ENCODE measurements at regions of chr3 and their contacts with region 1.

Region 1: DNA sequence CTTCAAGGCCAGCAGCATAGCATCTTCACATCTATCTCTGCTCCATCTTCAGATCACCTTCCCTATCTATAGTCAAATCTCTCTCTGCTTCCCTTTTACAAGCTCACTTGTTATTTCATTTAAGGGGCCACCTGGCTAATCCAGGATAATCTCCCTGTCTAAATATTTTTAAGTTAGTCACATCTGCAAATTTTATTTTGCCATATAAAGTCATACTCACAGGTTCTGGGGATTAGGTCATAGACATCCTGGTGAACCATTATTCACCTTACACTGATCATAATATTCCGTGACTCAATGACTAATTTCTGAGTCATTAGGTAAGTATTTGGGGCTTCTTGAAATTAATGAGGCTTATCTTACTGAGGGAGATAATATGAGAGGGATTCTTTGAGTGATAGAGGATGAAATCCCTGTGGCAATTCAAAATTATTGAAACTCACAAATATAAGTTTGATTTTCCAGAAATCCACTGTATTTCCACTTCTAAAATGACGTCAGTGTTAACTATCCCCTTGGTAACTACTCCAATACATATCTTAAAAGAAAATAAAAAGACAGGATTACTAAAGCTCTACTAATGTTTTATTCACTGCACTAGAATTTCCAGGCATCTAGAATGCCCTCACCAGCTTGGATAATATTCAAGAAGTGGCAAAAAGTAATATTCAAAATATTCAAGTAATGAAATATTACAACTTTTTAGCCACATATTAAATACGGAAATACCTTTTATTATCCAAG is 93.7 kb upstream of the RBMS3 start:
- DNase-seq: no peak
- ATAC-seq: no peak

Region 2: GRCh38 chr3:28347374-28348264 is 839.5 kb before region 1 on chr3:
- intact Hi-C with region 1: no loop called
- DNase-seq: no peak
- ATAC-seq: no peak

Region 3: GRCh38 chr3:29240248-29240647 is 53.1 kb after region 1 on chr3:
- intact Hi-C with region 1: loop called (anchors 10 kb)
- DNase-seq: no peak
- ATAC-seq: peak; percentile 48